ENCODE measurements at regions of chr9 and their contacts with region 1.

Region 1: GRCh38 chr9:78121488-78121887 is 89.9 kb upstream of the GNAQ start:
- DNase-seq: peak in 9 of 10 donors; percentile 41 to 95 (median 80)

Region 2: GRCh38 chr9:77433675-77434445 is 687.6 kb before region 1 on chr9:
- intact Hi-C with region 1: loop called (anchors 5 kb)
- DNase-seq: peak; percentile 52 to 97 (median 76)

Region 3: GRCh38 chr9:77977210-77977611 is 144.3 kb before region 1 on chr9:
- intact Hi-C with region 1: loop called (anchors 5 kb)
- DNase-seq: peak in 9 of 10 donors; percentile 27 to 93 (median 61)